MCF 10A (cell line): ENCODE measurements at regions of chr14 and their contacts with region 1.

Region 1: DNA sequence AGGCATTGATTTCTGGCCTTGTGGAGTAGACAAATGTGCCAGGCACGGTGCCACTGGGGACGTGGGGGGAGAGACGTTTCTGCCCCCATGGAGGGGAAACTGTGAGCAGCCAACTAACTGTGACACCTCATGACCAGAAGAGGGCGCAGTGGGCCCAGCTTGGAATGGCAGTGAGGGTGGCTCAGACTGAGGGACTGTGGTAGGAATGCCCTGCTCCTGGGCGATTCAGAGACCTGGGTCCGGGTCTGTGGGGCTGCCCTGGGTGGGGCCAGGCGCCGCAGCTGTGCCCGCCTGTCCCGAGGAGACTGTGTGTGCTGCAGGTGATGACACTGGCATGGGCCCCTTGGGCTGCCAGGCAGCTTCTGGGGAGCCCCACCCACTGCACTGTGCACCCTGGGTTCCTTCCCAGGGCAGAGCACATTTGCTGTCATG is 60.6 kb downstream of the SLC25A47 start:
- DNase-seq: peak; percentile 77
- H3K4me3 Mint-ChIP-seq: no peak overlapping the region
- H3K27ac Mint-ChIP-seq: no peak overlapping the region
- H3K4me1 Mint-ChIP-seq: peaks cover 29% of the 10 kb centered on the region
- H3K27me3 Mint-ChIP-seq: no peaks in the 10 kb centered on the region
- CTCF ChIP-seq: peak; percentile 69

Region 2: DNA sequence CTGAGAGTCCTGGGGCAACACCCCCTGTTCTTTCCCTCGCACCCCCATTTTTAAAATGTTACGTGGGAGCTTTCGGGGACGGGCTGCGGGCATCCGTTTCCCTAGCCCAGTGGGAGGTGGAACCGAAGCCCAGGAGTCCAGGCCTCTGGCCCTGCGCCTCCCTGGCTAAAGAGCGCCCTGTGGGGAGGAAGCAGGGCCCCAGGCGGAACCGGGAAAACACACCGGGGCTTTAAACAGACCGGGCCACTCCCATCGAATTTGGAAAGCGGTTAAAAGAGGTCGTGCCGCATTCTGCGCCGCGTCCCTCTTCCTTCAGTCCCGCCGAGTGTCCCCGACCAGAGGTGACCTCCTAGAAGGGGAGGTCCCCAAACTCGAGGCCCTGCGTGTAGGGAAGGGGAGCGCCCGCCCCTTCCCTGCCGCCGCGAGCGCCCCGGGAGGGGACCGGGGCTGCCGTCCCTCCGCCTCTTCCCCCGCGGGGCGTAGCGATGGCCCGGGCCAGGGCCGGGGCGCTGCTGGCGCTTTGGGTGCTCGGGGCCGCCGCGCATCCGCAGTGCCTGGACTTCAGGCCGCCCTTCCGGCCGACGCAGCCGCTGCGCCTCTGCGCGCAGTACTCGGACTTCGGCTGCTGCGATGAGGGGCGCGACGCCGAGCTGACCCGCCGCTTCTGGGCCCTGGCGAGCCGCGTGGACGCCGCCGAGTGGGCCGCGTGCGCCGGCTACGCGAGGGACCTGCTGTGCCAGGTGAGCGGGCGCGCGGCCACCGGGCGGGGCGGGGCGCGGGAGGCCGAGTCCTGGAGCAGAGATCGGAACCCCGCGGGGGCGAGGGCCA is 738.8 kb before region 1 on chr14 and contains the start of gene HHIPL1:
- CTCF ChIA-PET with region 1: no interaction called
- POLR2A ChIA-PET with region 1: no interaction called
- intact Hi-C with region 1: no loop called
- DNase-seq: no peak
- H3K4me3 Mint-ChIP-seq: no peak within 1 kb of the TSS
- H3K27ac Mint-ChIP-seq: no peak within 1 kb of the TSS
- H3K4me1 Mint-ChIP-seq: peaks cover 8% of the 10 kb centered on the region
- H3K27me3 Mint-ChIP-seq: no peaks in the 10 kb centered on the region
- CTCF ChIP-seq: no peak
- total RNA-seq, gene HHIPL1: 0.10 TPM in 1 of 2 replicates, not detected in the other

Region 3: DNA sequence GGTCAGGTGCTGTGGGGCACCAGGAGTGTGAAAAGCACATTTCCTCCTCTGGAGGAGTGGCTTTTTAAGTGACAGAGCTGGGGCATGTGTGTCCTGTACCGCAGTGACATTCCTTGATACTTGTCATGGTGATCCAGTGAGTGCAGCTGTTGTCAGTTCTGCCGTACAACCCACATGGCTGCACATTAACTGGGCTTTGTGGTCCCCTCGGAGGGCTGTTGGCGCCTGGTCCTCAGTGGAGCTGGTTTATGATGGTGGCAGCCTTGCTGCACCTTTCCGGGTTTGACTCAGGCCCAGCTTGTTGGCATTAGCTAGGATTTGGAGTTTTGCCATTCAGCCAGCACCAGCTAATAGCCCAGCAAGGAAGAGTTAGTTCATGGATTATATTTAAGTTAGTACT is 16.4 kb after region 1 on chr14:
- CTCF ChIA-PET with region 1: interaction called, 54 read pairs
- POLR2A ChIA-PET with region 1: interaction called, 4 read pairs
- intact Hi-C with region 1: no loop called
- DNase-seq: no peak
- H3K4me3 Mint-ChIP-seq: no peak overlapping the region
- H3K27ac Mint-ChIP-seq: no peak overlapping the region
- H3K4me1 Mint-ChIP-seq: peaks cover 4% of the 10 kb centered on the region
- H3K27me3 Mint-ChIP-seq: no peaks in the 10 kb centered on the region
- CTCF ChIP-seq: no peak

Region 4: DNA sequence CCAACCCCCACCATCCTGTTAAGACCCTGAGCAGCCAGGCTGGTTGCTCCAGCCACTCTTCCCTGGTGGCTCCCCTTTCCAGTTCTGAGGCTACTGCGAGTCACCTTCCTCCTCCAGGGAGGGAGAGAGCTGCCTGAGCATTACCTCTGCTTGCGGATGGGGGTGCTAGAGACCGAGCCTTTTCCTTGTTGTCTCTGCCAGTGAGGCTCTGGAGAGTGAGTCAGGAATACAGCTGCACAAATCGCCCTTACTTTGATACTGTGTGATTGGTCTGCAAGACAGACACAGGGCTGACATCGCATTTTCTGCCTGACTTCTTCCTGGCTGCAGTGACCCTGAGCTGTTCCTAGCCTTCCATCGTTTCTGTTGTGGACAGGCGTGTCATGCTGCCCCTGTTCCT is 33.7 kb after region 1 on chr14:
- CTCF ChIA-PET with region 1: interaction called, 23 read pairs
- POLR2A ChIA-PET with region 1: interaction called, 4 read pairs
- intact Hi-C with region 1: loop called (anchors 2 kb)
- DNase-seq: peak; percentile 85
- H3K4me3 Mint-ChIP-seq: no peak overlapping the region
- H3K27ac Mint-ChIP-seq: peak overlapping the region; percentile 30
- H3K4me1 Mint-ChIP-seq: peaks cover 21% of the 10 kb centered on the region
- H3K27me3 Mint-ChIP-seq: no peaks in the 10 kb centered on the region
- CTCF ChIP-seq: peak; percentile 70

Region 5: GRCh38 chr14:100440187-100440631 is 56.5 kb after region 1 on chr14:
- CTCF ChIA-PET with region 1: interaction called, 59 read pairs
- POLR2A ChIA-PET with region 1: interaction called, 3 read pairs
- intact Hi-C with region 1: loop called (anchors 1 kb)
- DNase-seq: peak; percentile 89
- H3K4me3 Mint-ChIP-seq: peak overlapping the region; percentile 48
- H3K27ac Mint-ChIP-seq: peak overlapping the region; percentile 87
- H3K4me1 Mint-ChIP-seq: peaks cover 23% of the 10 kb centered on the region
- H3K27me3 Mint-ChIP-seq: no peaks in the 10 kb centered on the region
- CTCF ChIP-seq: peak; percentile 85

Region 6: DNA sequence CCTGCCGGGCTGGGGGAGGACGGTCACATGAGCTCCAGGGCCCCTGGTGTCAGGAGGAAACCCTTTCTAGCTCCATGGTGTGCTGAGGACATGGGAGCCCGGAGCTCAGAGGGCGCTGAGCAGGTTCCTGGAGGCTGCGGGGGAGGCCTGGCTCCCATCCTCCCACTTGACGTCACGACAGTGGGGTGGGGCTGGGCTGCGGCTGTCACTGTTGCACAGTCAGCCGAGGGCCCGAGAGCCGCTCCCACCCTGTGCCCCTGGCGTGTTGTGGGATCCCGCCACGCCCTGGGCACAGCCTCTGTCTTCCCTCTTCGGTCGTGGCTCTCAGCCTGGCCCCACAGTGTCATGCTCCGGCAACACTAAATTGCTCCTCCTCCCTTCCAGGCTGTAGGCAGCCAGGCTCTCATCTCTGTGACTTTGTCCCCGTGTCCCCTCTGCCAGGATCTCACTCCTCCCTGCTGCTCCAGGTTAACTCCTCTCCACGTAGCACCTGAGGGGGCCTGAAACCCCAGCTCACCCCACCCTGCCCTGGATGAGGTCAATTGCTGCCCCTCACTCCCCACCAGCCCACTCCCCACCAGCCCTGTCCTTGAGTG is 170.4 kb after region 1 on chr14:
- CTCF ChIA-PET with region 1: no interaction called
- POLR2A ChIA-PET with region 1: no interaction called
- intact Hi-C with region 1: no loop called
- DNase-seq: peak; percentile 49
- H3K4me3 Mint-ChIP-seq: no peak overlapping the region
- H3K27ac Mint-ChIP-seq: peak overlapping the region; percentile 11
- H3K4me1 Mint-ChIP-seq: peaks cover 9% of the 10 kb centered on the region
- H3K27me3 Mint-ChIP-seq: no peaks in the 10 kb centered on the region
- CTCF ChIP-seq: no peak

Region 7: DNA sequence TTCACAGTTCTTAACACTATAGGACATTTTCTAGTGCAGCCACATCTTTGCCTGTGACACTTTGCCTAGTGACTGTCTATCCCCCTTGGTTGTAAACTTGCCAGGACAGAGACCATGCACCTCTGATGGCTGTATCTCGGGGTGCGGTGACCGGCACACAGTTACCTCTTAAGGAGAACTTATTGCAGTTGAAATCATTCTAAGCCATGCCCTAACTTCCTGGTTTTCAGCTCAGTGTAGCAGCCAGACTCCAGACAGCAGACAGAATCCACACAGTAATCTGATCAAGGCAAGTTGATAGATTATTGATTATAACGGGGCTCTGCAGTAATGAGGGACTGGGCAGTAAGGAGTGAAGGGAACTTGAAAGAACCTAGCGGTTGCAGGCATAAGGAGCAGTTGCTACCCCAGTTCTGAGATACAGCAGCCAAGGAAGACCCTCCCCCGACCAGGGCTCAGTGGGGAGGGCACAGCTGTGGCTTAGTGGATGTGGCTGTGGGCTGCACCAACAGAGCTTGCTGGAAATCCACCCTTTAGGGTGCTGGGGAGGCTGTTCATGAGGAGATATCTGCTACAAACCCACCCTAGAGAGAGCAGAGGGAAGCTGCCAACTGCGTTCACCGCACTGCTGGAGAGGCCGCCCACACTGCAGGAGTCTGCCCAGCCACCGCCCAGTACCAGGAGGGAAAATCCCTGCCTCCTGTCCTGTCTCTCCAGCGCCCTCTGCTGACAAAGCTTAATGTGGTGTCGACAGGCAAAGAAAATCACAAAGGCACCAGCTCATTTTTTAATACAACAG is 261.6 kb after region 1 on chr14:
- CTCF ChIA-PET with region 1: interaction called, 103 read pairs
- POLR2A ChIA-PET with region 1: interaction called, 6 read pairs
- intact Hi-C with region 1: loop called (anchors 1 kb)
- DNase-seq: peak; percentile 90
- H3K4me3 Mint-ChIP-seq: no peak overlapping the region
- H3K27ac Mint-ChIP-seq: no peak overlapping the region
- H3K4me1 Mint-ChIP-seq: peaks cover 5% of the 10 kb centered on the region
- H3K27me3 Mint-ChIP-seq: no peaks in the 10 kb centered on the region
- CTCF ChIP-seq: peak; percentile 82

Region 8: GRCh38 chr14:100900837-100901390 is 517.2 kb after region 1 on chr14:
- CTCF ChIA-PET with region 1: interaction called, 8 read pairs
- POLR2A ChIA-PET with region 1: no interaction called
- intact Hi-C with region 1: loop called (anchors 2 kb)
- DNase-seq: peak; percentile 35
- H3K4me3 Mint-ChIP-seq: no peak overlapping the region
- H3K27ac Mint-ChIP-seq: no peak overlapping the region
- H3K4me1 Mint-ChIP-seq: peaks cover 5% of the 10 kb centered on the region
- H3K27me3 Mint-ChIP-seq: peaks cover 92% of the 10 kb centered on the region
- CTCF ChIP-seq: peak; percentile 40